Colonic mucosa (tissue), 4 donors: ENCODE measurements at regions of chr11 and their contacts with region 1.

Region 1: DNA sequence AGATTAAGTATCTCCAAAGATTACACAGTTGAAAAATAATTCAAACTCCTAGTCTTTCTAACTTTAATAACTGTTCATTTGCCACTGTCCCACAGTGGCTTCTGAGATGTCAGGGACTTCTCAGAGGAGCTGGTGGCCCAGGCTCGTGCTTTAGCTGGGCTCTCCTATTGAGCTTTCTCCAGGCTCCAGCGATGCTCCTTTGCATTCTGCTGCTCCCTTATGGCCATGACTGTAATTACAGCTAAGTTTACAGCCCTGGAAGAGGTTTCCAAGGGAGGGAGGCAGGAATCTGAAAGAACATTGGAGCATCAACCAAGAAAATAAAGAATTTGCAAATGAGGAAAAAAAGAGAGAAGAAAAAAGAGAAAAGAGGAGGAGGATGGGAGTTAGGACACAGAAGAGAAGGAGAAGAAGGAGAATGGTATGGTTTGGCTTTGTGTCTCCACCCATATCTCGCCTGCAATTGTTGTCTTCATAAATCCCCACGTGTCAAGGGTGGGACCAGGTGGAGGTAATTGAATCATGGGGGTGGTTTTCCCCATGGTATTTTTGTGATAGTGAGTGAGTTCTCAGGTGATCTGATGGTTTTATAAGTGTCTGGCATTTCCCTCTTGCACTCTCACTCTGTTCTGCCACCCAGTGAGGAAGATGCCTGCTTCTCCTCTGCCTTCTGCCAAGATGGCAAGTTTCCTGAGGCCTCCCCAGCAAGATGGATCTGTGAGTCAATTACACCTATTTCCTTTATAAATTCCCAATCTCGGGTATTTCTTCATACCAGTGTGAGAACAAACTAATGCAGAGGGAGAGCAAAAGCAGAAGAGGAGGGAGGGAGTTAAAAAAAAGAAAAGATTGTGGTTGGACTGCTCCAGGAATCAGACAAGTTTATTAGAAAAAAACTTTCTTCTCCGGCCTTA is 857.0 kb downstream of the KCNA4 start:
- DNase-seq: peak; percentile 37
- H3K4me3 ChIP-seq: no peak overlapping the region
- H3K27ac ChIP-seq: no peak overlapping the region
- H3K4me1 ChIP-seq: no peaks in the 10 kb centered on the region
- H3K27me3 ChIP-seq: no peaks in the 10 kb centered on the region
- CTCF ChIP-seq: peak; percentile 52

Region 2: DNA sequence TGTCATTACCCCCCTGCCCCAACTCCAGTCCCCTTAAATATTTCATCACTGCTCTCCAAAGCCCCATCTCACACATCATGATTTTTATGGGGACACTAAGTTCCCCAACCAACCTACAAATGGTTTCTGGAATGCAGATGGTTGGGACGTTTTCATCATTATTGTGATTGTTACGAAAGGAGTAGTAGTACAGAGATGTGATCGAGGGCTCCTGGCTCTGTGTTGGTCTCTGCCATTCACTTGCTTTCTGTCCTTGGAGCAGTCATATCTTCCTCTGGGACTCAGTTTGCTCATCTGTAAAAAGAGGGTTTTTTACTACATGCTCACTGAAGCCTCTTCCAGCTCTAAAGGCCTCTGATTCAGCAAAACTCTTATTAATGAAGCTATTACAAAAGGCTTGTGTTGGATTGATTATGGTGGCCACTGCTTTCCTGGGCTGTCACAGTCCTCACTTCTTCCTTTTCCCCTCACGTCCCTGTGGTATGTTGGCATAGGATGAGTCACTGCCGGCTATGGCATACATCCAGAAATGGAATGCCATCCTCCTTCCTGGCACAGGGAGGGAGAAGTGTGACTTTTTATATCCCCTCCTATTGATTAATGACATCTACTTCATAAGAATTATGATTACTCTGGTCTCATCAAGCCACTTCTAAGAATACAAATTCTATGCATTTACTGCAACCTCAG is 457.9 kb before region 1 on chr11:
- intact Hi-C with region 1: loop called (anchors 10 kb)
- DNase-seq: no peak
- H3K4me3 ChIP-seq: no peak overlapping the region
- H3K27ac ChIP-seq: no peak overlapping the region
- H3K4me1 ChIP-seq: no peaks in the 10 kb centered on the region
- H3K27me3 ChIP-seq: no peaks in the 10 kb centered on the region
- CTCF ChIP-seq: no peak